ENCODE measurements at regions of chr10 and their contacts with region 1.

Region 1: GRCh38 chr10:116688241-116688711 is 54.1 kb downstream of the HSPA12A start:
- DNase-seq: peak in 2 of 4 donors; percentile 35 to 40
- ATAC-seq: peak; percentile 66
- H3K4me3 ChIP-seq: no peak overlapping the region
- H3K27ac ChIP-seq: no peak overlapping the region
- H3K4me1 ChIP-seq: peaks cover 0 to 8% of the 10 kb centered on the region in 2 donors
- H3K27me3 ChIP-seq: peaks cover 0 to 5% of the 10 kb centered on the region in 2 donors
- CTCF ChIP-seq: no peak

Region 2: GRCh38 chr10:116627386-116627933 is 60.8 kb before region 1 on chr10:
- intact Hi-C with region 1: no loop called
- DNase-seq: peak in 1 of 4 donors; percentile 36
- ATAC-seq: peak; percentile 94
- H3K4me3 ChIP-seq: no peak overlapping the region
- H3K27ac ChIP-seq: no peak overlapping the region
- H3K4me1 ChIP-seq: no peaks in the 10 kb centered on the region
- H3K27me3 ChIP-seq: peaks cover 12 to 43% of the 10 kb centered on the region in 2 donors
- CTCF ChIP-seq: peak in 1 of 2 donors; percentile 14

Region 3: GRCh38 chr10:116787893-116788665 is 99.8 kb after region 1 on chr10:
- intact Hi-C with region 1: loop called (anchors 5 to 10 kb)
- DNase-seq: peak; percentile 63 to 92 (median 76)
- ATAC-seq: peak; percentile 96
- H3K4me3 ChIP-seq: no peak overlapping the region
- H3K27ac ChIP-seq: no peak overlapping the region
- H3K4me1 ChIP-seq: peaks cover 4 to 5% of the 10 kb centered on the region in 2 donors
- H3K27me3 ChIP-seq: peaks cover 0 to 43% of the 10 kb centered on the region in 2 donors
- CTCF ChIP-seq: peak; percentile 97 to 99

Region 4: DNA sequence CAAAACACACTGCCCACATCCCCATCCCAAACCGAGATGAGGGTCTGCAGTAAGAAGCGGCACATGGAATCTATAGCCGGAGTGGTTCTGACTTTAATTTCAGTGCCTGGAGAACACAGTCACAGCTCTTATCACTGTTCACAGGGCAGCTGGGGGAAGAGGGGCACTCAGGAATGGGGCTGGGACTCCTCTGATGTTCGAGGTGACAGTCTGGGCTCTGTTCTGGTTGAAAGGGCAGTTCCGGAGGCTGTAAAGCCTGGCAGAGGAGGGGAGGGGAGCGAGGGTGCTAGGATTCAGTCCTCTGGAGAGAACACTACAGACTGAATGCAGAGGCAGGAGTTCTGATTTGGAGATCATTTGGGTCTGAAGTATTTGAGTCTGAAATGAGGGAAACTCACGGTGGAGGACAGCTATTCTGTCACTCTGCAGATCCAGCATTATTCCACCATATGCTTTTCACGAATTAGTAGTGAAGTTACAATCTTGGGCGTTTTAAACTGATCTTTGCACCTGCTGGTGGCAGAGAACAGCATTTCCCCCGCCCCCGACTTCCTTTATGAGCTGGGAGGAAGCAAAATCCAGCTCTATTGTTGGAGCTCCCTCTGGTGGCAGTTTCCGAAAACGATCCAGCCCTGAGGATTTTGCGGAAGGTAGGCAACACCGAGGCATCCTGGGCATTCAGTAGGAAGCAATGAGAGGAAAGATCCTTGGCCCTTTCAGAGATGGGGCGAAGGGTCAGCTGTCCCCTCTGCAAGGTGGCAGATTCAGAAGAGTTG is 486.4 kb after region 1 on chr10:
- intact Hi-C with region 1: loop called in 1 of 2 experiments (anchors 10 kb)
- DNase-seq: peak in 3 of 4 donors; percentile 62 to 78 (median 74)
- ATAC-seq: peak; percentile 97
- H3K4me3 ChIP-seq: peak overlapping the region; percentile 13 to 44
- H3K27ac ChIP-seq: no peak overlapping the region
- H3K4me1 ChIP-seq: peaks cover 5 to 13% of the 10 kb centered on the region in 2 donors
- H3K27me3 ChIP-seq: peaks cover 44 to 78% of the 10 kb centered on the region in 2 donors
- CTCF ChIP-seq: peak; percentile 83 to 87